AG04450 (cell line): ENCODE measurements at regions of chr11 and their contacts with region 1.

Region 1: GRCh38 chr11:82994604-82995230 is 77.0 kb downstream of the RAB30 start:
- DNase-seq: no peak
- H3K4me3 ChIP-seq: no peak overlapping the region
- H3K27ac ChIP-seq: no peak overlapping the region
- H3K27me3 ChIP-seq: no peaks in the 10 kb centered on the region
- CTCF ChIP-seq: no peak

Region 2: DNA sequence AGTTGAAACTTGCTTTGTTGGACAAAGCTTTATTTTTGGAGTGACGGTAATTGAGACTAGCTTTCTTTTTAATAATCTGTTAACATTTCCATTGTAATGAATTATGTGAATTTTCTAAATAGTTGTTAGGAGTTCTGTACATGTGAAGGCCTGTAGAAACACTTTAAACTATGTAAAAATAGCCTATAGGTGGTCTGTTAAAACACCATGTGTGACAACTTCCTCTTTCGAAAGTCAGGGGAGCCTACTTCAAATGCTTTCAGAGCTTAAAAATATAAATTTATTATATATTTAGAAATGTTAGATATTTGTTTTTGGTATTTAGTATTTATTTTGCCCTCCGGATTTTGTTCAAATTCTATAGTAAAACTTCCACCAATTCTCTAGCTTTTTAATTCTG is 64.5 kb before region 1 on chr11:
- CTCF ChIA-PET with region 1: interaction called, 13 read pairs
- POLR2A ChIA-PET with region 1: no interaction called
- DNase-seq: no peak
- H3K4me3 ChIP-seq: no peak overlapping the region
- H3K27ac ChIP-seq: no peak overlapping the region
- H3K27me3 ChIP-seq: no peaks in the 10 kb centered on the region
- CTCF ChIP-seq: no peak

Region 3: GRCh38 chr11:82959987-82960778 is 34.5 kb before region 1 on chr11:
- CTCF ChIA-PET with region 1: no interaction called
- POLR2A ChIA-PET with region 1: no interaction called
- DNase-seq: no peak
- H3K4me3 ChIP-seq: no peak overlapping the region
- H3K27ac ChIP-seq: no peak overlapping the region
- H3K27me3 ChIP-seq: no peaks in the 10 kb centered on the region
- CTCF ChIP-seq: no peak